Colonic mucosa (tissue), 4 donors: ENCODE measurements at regions of chr6 and their contacts with region 1.

Region 1: GRCh38 chr6:138817822-138818308 is 22.0 kb downstream of the ECT2L start:
- DNase-seq: peak; percentile 94
- H3K4me3 ChIP-seq: no peak overlapping the region
- H3K27ac ChIP-seq: peak overlapping the region; percentile 54
- H3K4me1 ChIP-seq: peaks cover 5% of the 10 kb centered on the region
- H3K27me3 ChIP-seq: no peaks in the 10 kb centered on the region
- CTCF ChIP-seq: no peak

Region 2: DNA sequence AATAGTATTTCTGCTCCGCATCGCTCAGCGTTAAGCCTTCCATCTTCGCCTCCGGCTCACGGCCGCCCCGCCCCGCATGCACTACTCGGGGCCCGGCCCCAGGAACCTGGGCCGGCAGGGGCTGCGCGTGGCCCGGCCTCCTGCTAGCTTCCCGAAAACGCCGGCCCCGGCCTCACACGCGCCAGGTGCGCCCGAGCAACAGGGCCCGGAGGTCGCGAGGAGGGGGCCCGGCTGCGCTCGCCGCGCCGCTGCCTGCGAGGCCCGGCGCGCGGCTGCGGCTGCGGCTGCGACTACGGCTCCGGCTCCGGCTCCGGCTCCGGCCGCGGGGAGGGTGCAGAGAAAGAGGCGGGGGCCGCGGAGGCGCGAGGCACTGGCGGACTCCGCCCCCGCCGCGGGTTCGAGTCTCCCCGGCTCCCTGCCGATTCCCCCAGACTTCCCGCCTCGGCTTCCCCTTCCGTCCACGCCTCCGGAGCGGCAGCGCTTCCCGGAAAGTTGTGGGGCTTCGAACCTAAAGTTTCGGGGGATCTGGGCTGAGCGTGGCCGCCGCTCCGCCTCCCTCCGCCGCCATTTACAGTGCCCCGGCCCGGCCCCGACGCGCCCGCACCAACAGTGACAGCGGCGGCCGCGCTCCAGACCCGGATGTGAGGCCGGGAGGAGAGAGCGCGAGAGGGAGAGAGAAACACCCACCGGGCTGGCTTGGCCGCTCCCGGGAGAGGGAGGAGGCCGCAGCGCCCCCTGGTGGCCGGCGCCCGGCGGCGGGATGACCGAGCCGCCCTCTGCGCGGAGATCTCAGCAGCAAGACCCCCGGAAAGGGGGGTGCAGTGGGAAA is 170.0 kb after region 1 on chr6 and contains the start of gene REPS1:
- intact Hi-C with region 1: loop called (anchors 2 kb)
- DNase-seq: peak; percentile 90
- H3K4me3 ChIP-seq: peak within 1 kb of the TSS; percentile 88
- H3K27ac ChIP-seq: peak within 1 kb of the TSS; percentile 84
- H3K4me1 ChIP-seq: peaks cover 8% of the 10 kb centered on the region
- H3K27me3 ChIP-seq: no peaks in the 10 kb centered on the region
- CTCF ChIP-seq: peak; percentile 97
- total RNA-seq, gene REPS1: 36.1 to 37.3 TPM

Region 3: DNA sequence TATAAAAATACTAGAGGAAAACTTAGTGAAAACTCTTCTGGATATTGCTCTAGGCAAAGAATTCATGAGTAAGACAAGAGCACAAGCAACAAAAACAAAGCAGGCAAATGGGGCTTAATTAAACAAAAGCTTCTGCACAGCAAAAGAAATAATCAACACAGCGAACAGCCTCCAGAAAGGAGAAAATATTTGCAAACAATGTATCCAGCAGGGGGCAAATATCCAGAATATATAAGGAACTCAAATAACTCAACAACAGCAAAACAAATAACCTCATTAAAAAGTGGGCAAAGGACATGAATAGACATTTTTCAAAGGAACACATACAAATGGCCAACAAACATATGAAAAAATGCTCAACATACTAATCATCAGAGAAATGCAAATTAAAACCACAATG is 299.9 kb after region 1 on chr6:
- intact Hi-C with region 1: loop called (anchors 10 kb)
- DNase-seq: no peak
- H3K4me3 ChIP-seq: no peak overlapping the region
- H3K27ac ChIP-seq: no peak overlapping the region
- H3K4me1 ChIP-seq: no peaks in the 10 kb centered on the region
- H3K27me3 ChIP-seq: no peaks in the 10 kb centered on the region
- CTCF ChIP-seq: no peak